ENCODE measurements at regions of chr9 and their contacts with region 1.

Region 1: GRCh38 chr9:124852829-124853531 is at the start of gene WDR38:
- DNase-seq: peak; percentile 73
- H3K4me3 ChIP-seq: peak within 1 kb of the TSS; percentile 26 to 73 (median 31)
- H3K4me3 Mint-ChIP-seq: peak within 1 kb of the TSS; percentile 78 to 89
- H3K27ac ChIP-seq: no peak within 1 kb of the TSS
- H3K27ac Mint-ChIP-seq: peak within 1 kb of the TSS in 3 of 7 donors; percentile 26 to 42 (median 30)
- H3K4me1 ChIP-seq: peaks cover 7 to 13% of the 10 kb centered on the region in 2 donors
- H3K4me1 Mint-ChIP-seq: peaks cover 8% of the 10 kb centered on the region
- H3K27me3 ChIP-seq: no peaks in the 10 kb centered on the region
- H3K27me3 Mint-ChIP-seq: peaks cover 6 to 13% (median 6%) of the 10 kb centered on the region in 3 donors
- CTCF ChIP-seq: peak; percentile 100
- polyA plus RNA-seq, gene WDR38: not detected

Region 2: DNA sequence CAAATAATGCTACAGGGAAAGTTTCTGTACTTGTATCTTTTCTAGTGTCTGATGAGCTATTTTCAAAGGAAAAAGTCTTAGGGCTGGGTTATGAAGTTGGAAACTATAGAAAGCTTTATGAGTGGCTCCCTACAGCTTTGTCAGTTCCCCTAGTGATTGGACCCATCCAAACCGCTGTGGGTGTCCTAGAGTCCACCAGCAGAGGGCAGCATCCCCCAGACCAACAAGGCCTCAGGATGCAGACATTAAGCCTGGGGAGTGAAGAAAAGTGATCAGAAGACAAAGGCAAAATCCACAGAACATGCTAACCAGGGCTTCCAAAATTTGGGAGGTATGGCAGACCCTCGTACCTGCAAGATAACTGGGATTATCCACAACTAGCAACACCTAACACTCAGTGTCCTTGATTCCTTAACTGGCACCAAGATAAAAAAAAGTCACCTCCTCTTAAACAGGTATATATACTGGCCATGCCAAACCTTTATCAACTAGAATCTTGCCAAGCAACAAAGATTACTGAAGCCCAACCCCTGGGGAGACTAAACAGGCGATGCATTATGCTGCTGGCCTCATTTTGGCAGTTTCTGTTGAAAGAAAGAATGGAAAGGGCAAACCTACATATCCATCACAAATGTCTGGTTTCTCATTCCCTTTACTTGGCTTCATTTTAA is 235.4 kb before region 1 on chr9:
- intact Hi-C with region 1: loop called (anchors 1 to 5 kb)
- DNase-seq: peak; percentile 48 to 61 (median 58)
- H3K4me3 ChIP-seq: no peak overlapping the region
- H3K4me3 Mint-ChIP-seq: no peak overlapping the region
- H3K27ac ChIP-seq: no peak overlapping the region
- H3K27ac Mint-ChIP-seq: no peak overlapping the region
- H3K4me1 ChIP-seq: no peaks in the 10 kb centered on the region
- H3K4me1 Mint-ChIP-seq: peaks cover 4% of the 10 kb centered on the region
- H3K27me3 ChIP-seq: no peaks in the 10 kb centered on the region
- H3K27me3 Mint-ChIP-seq: no peaks in the 10 kb centered on the region
- CTCF ChIP-seq: peak; percentile 93

Region 3: GRCh38 chr9:124708633-124709291 is 144.2 kb before region 1 on chr9:
- intact Hi-C with region 1: loop called in 1 of 2 experiments (anchors 5 kb)
- DNase-seq: no peak
- H3K4me3 ChIP-seq: no peak overlapping the region
- H3K4me3 Mint-ChIP-seq: no peak overlapping the region
- H3K27ac ChIP-seq: no peak overlapping the region
- H3K27ac Mint-ChIP-seq: no peak overlapping the region
- H3K4me1 ChIP-seq: no peaks in the 10 kb centered on the region
- H3K4me1 Mint-ChIP-seq: peaks cover 2% of the 10 kb centered on the region
- H3K27me3 ChIP-seq: no peaks in the 10 kb centered on the region
- H3K27me3 Mint-ChIP-seq: peaks cover 0 to 2% (median 0%) of the 10 kb centered on the region in 3 donors
- CTCF ChIP-seq: no peak

Region 4: DNA sequence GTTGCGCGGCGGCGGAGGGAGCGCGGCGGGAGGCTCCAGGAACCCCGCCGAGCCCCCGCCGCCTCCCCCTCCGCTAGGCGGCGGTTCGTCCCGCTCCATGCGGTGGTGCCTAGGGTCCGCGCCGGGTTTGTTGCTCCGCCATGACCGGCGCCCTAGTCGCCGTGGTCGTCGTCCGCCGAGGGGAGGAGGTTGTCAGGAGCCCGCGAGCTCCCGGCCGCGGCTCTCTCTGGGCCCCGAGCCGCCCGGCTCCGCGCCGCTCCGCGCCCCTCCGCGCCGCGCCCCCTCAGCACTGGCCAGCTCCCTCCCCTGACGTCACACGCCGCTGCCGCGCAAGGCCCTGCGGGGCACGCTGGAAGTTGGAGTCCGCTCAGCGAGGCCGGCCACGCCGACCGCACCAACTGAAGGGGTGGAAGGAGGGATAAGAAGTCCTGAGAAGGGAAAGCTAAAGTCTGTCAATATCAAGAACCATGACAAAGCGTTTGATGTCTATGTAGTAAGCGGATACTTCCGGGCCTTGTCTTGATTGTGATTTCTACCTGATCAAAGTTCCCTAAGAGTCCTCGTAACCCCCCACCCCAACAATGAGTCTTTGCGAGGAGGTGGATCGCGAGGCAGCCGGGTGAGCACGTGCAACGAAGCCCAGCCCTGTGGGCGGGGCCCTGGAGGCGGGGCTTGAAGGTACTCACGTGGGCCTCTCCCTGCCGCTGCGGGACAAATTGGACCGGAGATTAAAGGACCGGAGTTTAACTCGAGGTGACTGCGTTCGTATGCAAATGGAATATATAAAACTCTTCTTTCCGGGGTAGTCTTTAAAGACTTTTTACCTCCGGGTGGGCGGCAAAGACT is 81.7 kb before region 1 on chr9 and contains the start of gene NR6A1:
- intact Hi-C with region 1: loop called (anchors 1 to 2 kb)
- DNase-seq: peak; percentile 92 to 94 (median 93)
- H3K4me3 ChIP-seq: peak within 1 kb of the TSS; percentile 74 to 97 (median 95)
- H3K4me3 Mint-ChIP-seq: peak within 1 kb of the TSS; percentile 96 to 99
- H3K27ac ChIP-seq: peak within 1 kb of the TSS; percentile 46 to 91
- H3K27ac Mint-ChIP-seq: peak within 1 kb of the TSS; percentile 92 to 98 (median 97)
- H3K4me1 ChIP-seq: peaks cover 43 to 73% of the 10 kb centered on the region in 2 donors
- H3K4me1 Mint-ChIP-seq: peaks cover 70% of the 10 kb centered on the region
- H3K27me3 ChIP-seq: peaks cover 0 to 16% of the 10 kb centered on the region in 2 donors
- H3K27me3 Mint-ChIP-seq: peaks cover 17 to 31% (median 24%) of the 10 kb centered on the region in 3 donors
- CTCF ChIP-seq: no peak
- polyA plus RNA-seq, gene NR6A1: 0.15 to 2.9 (median 0.28) TPM

Measured in CD14-positive monocyte (primary cell).